Activated CD8-positive, alpha-beta memory T cell treated with anti-CD3 and anti-CD28 coated beads, Interleukin-2, amount 10 ng/mL, durations not matched to agents 7 days and 5 days (primary cell): ENCODE measurements at regions of chr3 and their contacts with region 1.

Region 1: GRCh38 chr3:172595641-172596393 is 72.6 kb upstream of the TNFSF10 start:
- DNase-seq: peak; percentile 72
- ATAC-seq: peak; percentile 34
- H3K4me3 Mint-ChIP-seq: peak overlapping the region; percentile 72
- H3K27ac Mint-ChIP-seq: peak overlapping the region; percentile 84
- H3K4me1 Mint-ChIP-seq: peaks cover 59% of the 10 kb centered on the region
- H3K27me3 Mint-ChIP-seq: peaks cover 6% of the 10 kb centered on the region

Region 2: GRCh38 chr3:172461530-172462138 is 134.2 kb before region 1 on chr3:
- CTCF ChIA-PET with region 1: interaction called, 16 read pairs
- DNase-seq: no peak
- ATAC-seq: peak; percentile 60
- H3K4me3 Mint-ChIP-seq: no peak overlapping the region
- H3K27ac Mint-ChIP-seq: no peak overlapping the region
- H3K4me1 Mint-ChIP-seq: peaks cover 2% of the 10 kb centered on the region
- H3K27me3 Mint-ChIP-seq: peaks cover 2% of the 10 kb centered on the region

Region 3: DNA sequence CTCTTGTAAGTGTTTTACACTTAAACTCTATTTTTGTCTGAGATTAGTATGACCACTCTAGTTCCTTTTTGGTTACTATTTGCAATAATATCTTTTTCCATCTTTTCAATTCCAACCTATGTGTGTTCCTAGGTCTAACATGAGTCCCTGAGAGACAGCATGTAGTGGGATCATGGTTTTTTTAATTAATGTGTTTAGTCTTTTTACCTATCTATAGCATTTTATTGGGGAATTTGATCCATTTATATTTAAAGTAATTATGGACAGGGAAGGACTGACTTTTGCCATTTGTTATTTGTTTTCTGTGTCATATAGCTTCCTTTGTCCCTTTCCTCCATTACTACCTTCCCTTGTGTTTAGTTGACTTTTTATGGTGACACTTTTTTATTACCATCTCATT is 94.3 kb before region 1 on chr3:
- CTCF ChIA-PET with region 1: interaction called, 22 read pairs
- DNase-seq: no peak
- ATAC-seq: no peak
- H3K4me3 Mint-ChIP-seq: no peak overlapping the region
- H3K27ac Mint-ChIP-seq: no peak overlapping the region
- H3K4me1 Mint-ChIP-seq: peaks cover 12% of the 10 kb centered on the region
- H3K27me3 Mint-ChIP-seq: no peaks in the 10 kb centered on the region

Region 4: DNA sequence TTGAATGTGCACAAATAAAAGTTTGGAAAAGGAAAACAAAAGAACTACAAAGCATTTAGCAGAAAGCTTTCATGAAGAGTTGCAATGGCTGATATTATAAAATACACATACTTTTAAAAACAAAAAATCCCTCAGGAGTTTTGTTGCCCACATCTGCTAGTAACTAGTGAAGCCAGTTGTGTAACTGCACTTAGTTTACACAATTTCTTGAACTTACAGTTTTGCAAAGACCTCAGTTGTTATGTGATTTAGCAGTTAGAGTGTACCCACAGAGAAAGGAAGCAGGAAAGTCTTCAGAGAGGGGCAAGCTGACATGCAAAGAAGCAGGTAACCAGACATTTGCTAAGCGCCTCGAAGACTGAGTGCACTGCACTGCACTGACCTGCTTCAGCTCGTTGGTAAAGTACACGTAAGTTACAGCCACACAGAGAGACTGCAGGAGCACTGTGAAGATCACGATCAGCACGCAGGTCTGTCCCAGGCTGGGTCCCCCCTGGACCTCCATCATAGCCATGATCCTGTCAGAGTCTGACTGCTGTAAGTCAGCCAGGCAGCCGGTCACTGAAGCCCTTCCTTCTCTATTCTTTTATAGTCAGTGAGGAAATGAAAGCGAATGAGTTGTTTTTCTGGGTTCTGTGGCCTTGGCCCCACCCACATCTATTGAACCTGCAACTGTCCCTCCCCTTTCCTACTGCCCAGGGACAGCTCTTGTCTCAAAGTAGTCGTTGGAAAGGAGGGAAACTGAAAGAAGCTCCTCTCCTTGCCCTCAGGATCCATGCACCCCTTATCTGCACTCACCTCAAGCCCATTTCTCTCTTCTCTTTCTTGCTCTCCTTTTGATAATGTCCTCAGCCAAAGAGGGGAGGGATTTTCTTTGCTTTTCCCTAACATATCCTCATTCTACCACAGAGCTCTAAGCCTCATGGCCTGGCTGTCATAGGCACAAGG is 72.7 kb before region 1 on chr3 and contains the start of gene TNFSF10:
- CTCF ChIA-PET with region 1: interaction called, 146 read pairs
- DNase-seq: peak; percentile 93
- ATAC-seq: peak; percentile 89
- H3K4me3 Mint-ChIP-seq: peak within 1 kb of the TSS; percentile 95
- H3K27ac Mint-ChIP-seq: peak within 1 kb of the TSS; percentile 98
- H3K4me1 Mint-ChIP-seq: peaks cover 44% of the 10 kb centered on the region
- H3K27me3 Mint-ChIP-seq: no peaks in the 10 kb centered on the region
- total RNA-seq, gene TNFSF10: 144 to 256 TPM

Region 5: GRCh38 chr3:172580680-172581401 is 15.0 kb before region 1 on chr3:
- CTCF ChIA-PET with region 1: interaction called, 90 read pairs
- DNase-seq: no peak
- ATAC-seq: peak; percentile 44
- H3K4me3 Mint-ChIP-seq: peak overlapping the region; percentile 56
- H3K27ac Mint-ChIP-seq: peak overlapping the region; percentile 85
- H3K4me1 Mint-ChIP-seq: peaks cover 91% of the 10 kb centered on the region
- H3K27me3 Mint-ChIP-seq: no peaks in the 10 kb centered on the region

Region 6: GRCh38 chr3:172666873-172667694 is 71.3 kb after region 1 on chr3:
- CTCF ChIA-PET with region 1: interaction called, 21 read pairs
- DNase-seq: peak; percentile 88
- ATAC-seq: peak; percentile 100
- H3K4me3 Mint-ChIP-seq: no peak overlapping the region
- H3K27ac Mint-ChIP-seq: no peak overlapping the region
- H3K4me1 Mint-ChIP-seq: peaks cover 18% of the 10 kb centered on the region
- H3K27me3 Mint-ChIP-seq: no peaks in the 10 kb centered on the region